Stomach (tissue), 19 donors: ENCODE measurements at regions of chr2 and their contacts with region 1.

Region 1: GRCh38 chr2:46062637-46063412 is 234.4 kb upstream of the EPAS1 start:
- DNase-seq: peak; percentile 85 to 92
- H3K4me3 ChIP-seq: no peak overlapping the region
- H3K27ac ChIP-seq: peak overlapping the region in 2 of 5 donors; percentile 19 to 45
- H3K4me1 ChIP-seq: peaks cover 5 to 28% (median 18%) of the 10 kb centered on the region in 4 donors
- H3K27me3 ChIP-seq: no peaks in the 10 kb centered on the region
- CTCF ChIP-seq: peak in 5 of 7 experiments; percentile 75 to 88 (median 86)
- EP300 ChIP-seq: no peak
- POLR2A ChIP-seq: no peak

Region 2: GRCh38 chr2:46296840-46297545 is 234.2 kb after region 1 on chr2 and contains the start of gene EPAS1:
- intact Hi-C with region 1: loop called (anchors 5 kb)
- DNase-seq: peak; percentile 92 to 96
- H3K4me3 ChIP-seq: peak within 1 kb of the TSS; percentile 55 to 89 (median 80)
- H3K27ac ChIP-seq: peak within 1 kb of the TSS; percentile 90 to 98 (median 94)
- H3K4me1 ChIP-seq: peaks cover 28 to 51% (median 43%) of the 10 kb centered on the region in 4 donors
- H3K27me3 ChIP-seq: peaks cover 0 to 27% (median 3%) of the 10 kb centered on the region in 3 donors
- CTCF ChIP-seq: no peak
- EP300 ChIP-seq: no peak
- POLR2A ChIP-seq: peak in 2 of 4 donors; percentile 19 to 36
- total RNA-seq, gene EPAS1: 69.0 to 217 (median 156) TPM

Region 3: GRCh38 chr2:46364797-46365457 is 302.1 kb after region 1 on chr2:
- intact Hi-C with region 1: loop called (anchors 10 kb)
- DNase-seq: peak; percentile 43 to 78
- H3K4me3 ChIP-seq: no peak overlapping the region
- H3K27ac ChIP-seq: no peak overlapping the region
- H3K4me1 ChIP-seq: peaks cover 0 to 13% (median 3%) of the 10 kb centered on the region in 4 donors
- H3K27me3 ChIP-seq: no peaks in the 10 kb centered on the region
- CTCF ChIP-seq: peak in 6 of 7 experiments; percentile 21 to 86 (median 76)
- EP300 ChIP-seq: no peak
- POLR2A ChIP-seq: no peak